Endothelial cell of umbilical vein (primary cell): ENCODE measurements at regions of chr5 and their contacts with region 1.

Region 1: DNA sequence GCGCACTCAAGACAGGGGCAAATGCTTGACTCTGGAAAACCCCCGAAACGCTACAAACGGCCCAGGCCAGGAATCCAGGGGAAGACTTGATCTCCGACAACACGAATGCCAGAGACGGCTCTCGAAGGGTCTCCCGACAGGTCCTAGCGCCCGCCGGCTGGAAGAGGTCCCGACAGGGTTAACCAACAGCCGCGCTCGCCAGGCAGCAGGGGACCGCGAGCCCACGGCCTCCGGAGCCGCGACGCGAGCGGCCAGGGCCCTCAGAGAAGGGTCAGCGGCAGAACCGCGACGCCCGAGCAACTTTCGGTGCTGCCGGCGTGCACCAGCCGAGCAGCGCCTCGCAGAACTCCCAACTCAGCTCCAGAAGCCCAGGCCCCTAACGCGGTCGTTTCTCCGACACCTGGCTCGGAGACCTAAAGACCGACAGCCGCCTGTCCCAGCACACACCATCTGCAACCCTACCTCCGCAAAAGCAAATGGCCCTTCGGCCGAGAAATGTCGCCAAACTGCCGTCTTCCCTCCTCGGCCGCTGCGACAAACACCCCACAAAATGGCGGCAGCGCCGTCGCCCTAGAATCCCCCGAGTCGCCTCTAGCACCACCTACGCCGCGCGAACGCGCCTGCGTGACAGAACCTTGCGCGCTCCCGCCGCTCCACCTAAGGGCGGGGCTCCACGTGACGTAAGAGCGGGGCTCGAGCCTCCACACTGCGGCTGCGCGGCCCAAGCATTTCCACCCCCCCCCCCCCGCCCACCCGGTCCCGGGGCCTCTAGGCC is at the start of gene CLK4:
- DNase-seq: peak; percentile 92
- H3K4me3 ChIP-seq: peak within 1 kb of the TSS; percentile 90 to 97 (median 93)
- H3K27ac ChIP-seq: peak within 1 kb of the TSS; percentile 61
- H3K4me1 ChIP-seq: peaks cover 9% of the 10 kb centered on the region
- H3K27me3 ChIP-seq: no peaks in the 10 kb centered on the region
- CTCF ChIP-seq: no peak
- POLR2A ChIP-seq: peak; percentile 91
- total RNA-seq, gene CLK4: 19.2 and 19.5 TPM in 2 replicates

Region 2: GRCh38 chr5:178642351-178642971 is 15.8 kb after region 1 on chr5:
- CTCF ChIA-PET with region 1: interaction called, 3 read pairs
- POLR2A ChIA-PET with region 1: no interaction called
- dilution Hi-C with region 1: no loop called
- intact Hi-C with region 1: loop called (anchors 1 kb)
- DNase-seq: peak; percentile 54
- H3K4me3 ChIP-seq: no peak overlapping the region
- H3K27ac ChIP-seq: peak overlapping the region; percentile 24
- H3K4me1 ChIP-seq: peaks cover 17% of the 10 kb centered on the region
- H3K27me3 ChIP-seq: no peaks in the 10 kb centered on the region
- CTCF ChIP-seq: no peak
- POLR2A ChIP-seq: no peak

Region 3: GRCh38 chr5:179023528-179024430 is 397.1 kb after region 1 on chr5 and contains the start of gene ZNF879:
- CTCF ChIA-PET with region 1: no interaction called
- POLR2A ChIA-PET with region 1: no interaction called
- dilution Hi-C with region 1: no loop called
- intact Hi-C with region 1: loop called (anchors 5 kb)
- DNase-seq: peak; percentile 96
- H3K4me3 ChIP-seq: peak within 1 kb of the TSS; percentile 72 to 80 (median 77)
- H3K27ac ChIP-seq: peak within 1 kb of the TSS; percentile 25
- H3K4me1 ChIP-seq: peaks cover 9% of the 10 kb centered on the region
- H3K27me3 ChIP-seq: no peaks in the 10 kb centered on the region
- CTCF ChIP-seq: no peak
- POLR2A ChIP-seq: no peak
- total RNA-seq, gene ZNF879: 2.7 and 3.7 TPM in 2 replicates

Region 4: GRCh38 chr5:179495906-179496455 is 869.3 kb after region 1 on chr5:
- CTCF ChIA-PET with region 1: interaction called, 6 read pairs
- POLR2A ChIA-PET with region 1: no interaction called
- dilution Hi-C with region 1: no loop called
- intact Hi-C with region 1: loop called (anchors 10 kb)
- DNase-seq: no peak
- H3K4me3 ChIP-seq: no peak overlapping the region
- H3K27ac ChIP-seq: no peak overlapping the region
- H3K4me1 ChIP-seq: no peaks in the 10 kb centered on the region
- H3K27me3 ChIP-seq: no peaks in the 10 kb centered on the region
- CTCF ChIP-seq: no peak
- POLR2A ChIP-seq: no peak